IMR-90 (cell line): ENCODE measurements at regions of chr15 and their contacts with region 1.

Region 1: GRCh38 chr15:94858011-94858740 is 626.8 kb downstream of the MCTP2 start:
- DNase-seq: no peak
- ATAC-seq: no peak
- H3K4me3 ChIP-seq: no peak overlapping the region
- H3K27ac ChIP-seq: no peak overlapping the region
- H3K4me1 ChIP-seq: no peaks in the 10 kb centered on the region
- H3K27me3 ChIP-seq: no peaks in the 10 kb centered on the region
- CTCF ChIP-seq: no peak
- POLR2A ChIP-seq: no peak
- RAD21 ChIP-seq: no peak

Region 2: GRCh38 chr15:94815110-94815731 is 43.0 kb before region 1 on chr15:
- CTCF ChIA-PET with region 1: no interaction called
- POLR2A ChIA-PET with region 1: no interaction called
- dilution Hi-C with region 1: no loop called
- in situ Hi-C with region 1: no loop called
- intact Hi-C with region 1: loop called (anchors 1 kb)
- DNase-seq: no peak
- ATAC-seq: no peak
- H3K4me3 ChIP-seq: no peak overlapping the region
- H3K27ac ChIP-seq: no peak overlapping the region
- H3K4me1 ChIP-seq: no peaks in the 10 kb centered on the region
- H3K27me3 ChIP-seq: no peaks in the 10 kb centered on the region
- CTCF ChIP-seq: no peak
- POLR2A ChIP-seq: no peak
- RAD21 ChIP-seq: no peak